Activated naive CD4-positive, alpha-beta T cell treated with anti-CD3 and anti-CD28 coated beads, Interleukin-2, amount 10 ng/mL, durations not matched to agents 7 days and 5 days (primary cell): ENCODE measurements at regions of chr5 and their contacts with region 1.

Region 1: DNA sequence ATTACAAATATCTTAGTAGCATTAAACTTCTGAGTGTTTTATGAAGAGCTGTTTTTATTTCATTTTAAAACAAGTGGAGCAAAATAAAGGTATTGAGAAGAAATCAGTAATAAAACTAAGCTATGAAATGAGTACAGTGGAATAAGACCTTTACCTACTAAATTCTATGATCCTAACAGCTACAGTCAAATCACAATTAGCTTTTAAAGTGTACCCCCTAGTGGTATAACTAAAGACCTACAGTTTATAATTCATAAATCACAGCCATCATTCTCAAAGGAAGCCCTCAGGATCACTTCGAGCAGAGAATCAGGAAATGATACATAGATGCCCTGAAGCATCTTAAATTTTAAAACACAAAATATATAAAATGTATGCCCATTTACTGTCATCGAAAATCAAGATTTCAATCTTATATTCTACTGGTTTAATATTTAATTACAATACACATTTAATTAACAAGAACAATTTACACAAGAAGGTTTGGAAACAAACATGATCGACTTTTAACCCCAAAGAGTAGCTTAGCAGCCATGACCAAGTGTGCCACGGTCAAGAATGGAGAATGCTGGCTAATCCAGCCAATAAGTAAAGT is 12.3 kb downstream of the CCNH start:
- DNase-seq: no peak
- H3K4me3 Mint-ChIP-seq: no peak overlapping the region
- H3K27ac Mint-ChIP-seq: no peak overlapping the region
- H3K4me1 Mint-ChIP-seq: peaks cover 22% of the 10 kb centered on the region
- H3K27me3 Mint-ChIP-seq: no peaks in the 10 kb centered on the region

Region 2: DNA sequence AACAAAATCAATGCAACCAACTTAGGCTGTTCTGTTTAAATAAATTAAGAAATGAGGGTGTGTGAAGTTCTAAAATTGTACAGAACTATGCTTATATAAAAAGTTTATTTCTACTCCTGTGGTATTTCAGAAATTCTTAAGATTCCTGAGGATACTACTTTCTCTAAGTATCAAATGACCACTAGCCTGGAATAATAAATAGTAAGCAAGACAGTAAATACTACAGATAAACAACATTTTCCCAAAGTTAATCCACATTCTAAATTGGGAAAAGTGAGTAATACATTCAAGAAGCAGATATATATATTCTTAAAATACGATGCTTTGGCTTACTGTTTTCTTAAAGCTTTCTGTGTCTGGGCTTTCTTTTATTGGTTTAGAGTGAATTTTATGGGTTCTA is 17.2 kb before region 1 on chr5:
- CTCF ChIA-PET with region 1: interaction called, 11 read pairs
- DNase-seq: no peak
- H3K4me3 Mint-ChIP-seq: no peak overlapping the region
- H3K27ac Mint-ChIP-seq: no peak overlapping the region
- H3K4me1 Mint-ChIP-seq: no peaks in the 10 kb centered on the region
- H3K27me3 Mint-ChIP-seq: no peaks in the 10 kb centered on the region

Region 3: DNA sequence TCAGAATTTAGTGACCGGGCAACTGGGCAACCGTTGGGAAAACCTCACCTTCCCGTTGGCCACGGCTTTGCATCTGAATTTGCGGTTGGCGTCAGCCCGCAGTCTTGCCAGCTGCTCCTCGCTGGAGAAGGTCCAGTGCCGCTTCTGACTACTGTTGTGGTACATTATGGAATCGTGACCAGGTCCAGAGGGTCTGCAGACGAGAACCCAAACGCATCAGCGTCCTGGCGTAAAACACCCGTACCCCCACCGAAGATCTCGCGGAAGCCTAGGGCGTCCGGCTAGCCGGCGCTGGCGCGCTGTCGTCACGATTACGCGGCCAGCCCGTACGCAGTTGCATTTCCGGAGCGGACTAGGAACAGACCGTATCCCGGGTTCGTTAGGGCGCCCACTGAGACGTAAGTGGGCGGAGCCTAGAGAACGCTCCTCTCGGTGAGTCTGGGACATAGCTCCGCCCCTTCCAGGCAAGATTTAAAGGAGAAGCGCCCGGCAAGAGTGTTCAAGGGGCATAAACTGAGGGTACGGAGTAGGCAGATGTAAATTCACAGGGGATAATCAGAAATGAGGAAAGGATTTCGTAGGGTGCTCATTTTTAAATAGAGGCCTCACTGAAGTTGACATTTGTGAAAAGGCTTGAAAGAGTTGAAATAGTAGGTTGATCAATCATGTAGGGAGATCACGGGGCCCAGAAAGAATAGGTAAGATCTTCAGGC is 12.4 kb after region 1 on chr5 and contains the start of gene CCNH:
- CTCF ChIA-PET with region 1: interaction called, 15 read pairs
- DNase-seq: peak; percentile 98
- H3K4me3 Mint-ChIP-seq: peak within 1 kb of the TSS; percentile 87
- H3K27ac Mint-ChIP-seq: peak within 1 kb of the TSS; percentile 94
- H3K4me1 Mint-ChIP-seq: peaks cover 39% of the 10 kb centered on the region
- H3K27me3 Mint-ChIP-seq: peaks cover 4% of the 10 kb centered on the region